ENCODE measurements at regions of chr3 and their contacts with region 1.

Region 1: GRCh38 chr3:122564155-122564912 is at the starts of genes DTX3L and PARP9:
- DNase-seq: peak; percentile 80 to 89
- ATAC-seq: peak; percentile 95
- H3K4me3 ChIP-seq: peak within 1 kb of the TSS; percentile 76
- H3K27ac ChIP-seq: peak within 1 kb of the TSS; percentile 75
- H3K4me1 ChIP-seq: peaks cover 17% of the 10 kb centered on the region
- H3K27me3 ChIP-seq: no peaks in the 10 kb centered on the region
- CTCF ChIP-seq: no peak
- total RNA-seq, gene DTX3L: 11.5 to 26.6 (median 12.2) TPM
- total RNA-seq, gene PARP9: 8.9 to 18.9 (median 12.6) TPM

Region 2: DNA sequence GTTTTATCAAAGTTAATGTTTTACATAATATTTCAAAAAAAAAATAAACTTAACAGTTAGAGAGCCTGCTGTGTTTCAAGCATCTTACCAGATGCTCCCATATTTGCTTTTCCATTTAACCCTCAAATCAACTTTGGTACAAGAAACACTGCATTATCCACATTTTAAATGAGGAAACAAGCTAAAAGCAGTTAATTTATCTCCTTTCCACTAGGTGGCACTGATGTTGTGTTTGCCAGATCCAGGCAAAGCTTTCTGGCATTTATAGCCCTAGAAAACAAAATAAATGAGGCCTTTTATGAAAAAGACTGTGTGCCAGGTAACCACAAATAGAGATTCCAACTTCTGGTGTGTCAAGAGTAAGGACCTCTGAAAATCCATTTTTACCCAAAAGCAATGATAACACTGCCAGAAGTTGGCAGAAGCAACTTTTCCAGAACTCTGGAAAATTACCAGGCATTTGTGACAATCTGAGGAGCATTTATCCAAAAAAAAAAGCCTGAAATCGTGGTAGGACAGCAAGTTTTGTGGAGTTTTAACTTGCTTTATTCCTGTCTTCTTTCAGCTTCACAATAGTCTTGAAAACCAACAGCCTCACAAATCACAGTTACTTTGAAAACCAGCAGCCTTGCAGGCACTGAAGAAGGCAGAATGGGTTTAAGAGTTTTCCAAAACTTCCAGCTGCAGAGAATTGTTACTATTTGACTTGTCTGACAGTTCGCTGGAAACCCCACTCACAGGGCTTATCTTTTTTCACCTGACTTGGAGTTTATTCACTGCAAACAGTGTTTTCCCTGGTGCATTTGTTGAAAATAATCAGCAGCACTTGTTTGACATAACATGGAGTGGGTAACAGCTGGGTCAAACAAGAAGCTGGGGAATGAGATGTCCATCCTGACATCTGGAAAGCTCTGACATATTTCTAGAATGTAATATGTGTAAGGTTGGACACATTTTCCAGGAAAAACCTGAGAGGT is 171.2 kb before region 1 on chr3:
- intact Hi-C with region 1: loop called in 1 of 2 experiments (anchors 5 kb)
- DNase-seq: no peak
- ATAC-seq: peak in 3 of 4 donors; percentile 43 to 76 (median 48)
- H3K4me3 ChIP-seq: no peak overlapping the region
- H3K27ac ChIP-seq: no peak overlapping the region
- H3K4me1 ChIP-seq: no peaks in the 10 kb centered on the region
- H3K27me3 ChIP-seq: no peaks in the 10 kb centered on the region
- CTCF ChIP-seq: peak; percentile 83

Region 3: DNA sequence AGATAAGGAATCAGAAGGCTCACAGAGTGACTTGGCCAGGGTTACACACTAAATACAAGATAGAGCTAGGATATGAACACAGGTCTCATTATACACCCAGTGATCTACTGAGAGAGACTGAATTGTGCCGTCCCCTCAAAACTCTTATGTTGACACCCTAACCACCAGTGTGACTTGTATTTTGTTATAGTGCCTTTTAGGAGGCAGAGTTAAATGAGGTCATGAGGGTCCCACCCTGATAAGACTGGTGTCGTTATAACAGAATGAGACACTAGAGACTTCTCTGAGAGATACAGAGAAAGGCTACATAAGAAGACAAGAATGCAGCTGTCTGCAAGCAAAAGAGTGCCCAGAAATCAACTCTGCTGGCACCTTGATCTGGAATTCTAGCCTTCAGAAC is 62.2 kb before region 1 on chr3:
- intact Hi-C with region 1: no loop called
- DNase-seq: no peak
- ATAC-seq: no peak
- H3K4me3 ChIP-seq: no peak overlapping the region
- H3K27ac ChIP-seq: peak overlapping the region; percentile 18
- H3K4me1 ChIP-seq: peaks cover 87% of the 10 kb centered on the region
- H3K27me3 ChIP-seq: no peaks in the 10 kb centered on the region
- CTCF ChIP-seq: no peak

Region 4: GRCh38 chr3:122514123-122515019 is 50.0 kb before region 1 on chr3 and contains the start of gene KPNA1:
- intact Hi-C with region 1: loop called in 1 of 2 experiments (anchors 5 kb)
- DNase-seq: peak; percentile 89 to 93
- ATAC-seq: peak; percentile 90 to 93 (median 92)
- H3K4me3 ChIP-seq: peak within 1 kb of the TSS; percentile 95
- H3K27ac ChIP-seq: peak within 1 kb of the TSS; percentile 100
- H3K4me1 ChIP-seq: peaks cover 43% of the 10 kb centered on the region
- H3K27me3 ChIP-seq: no peaks in the 10 kb centered on the region
- CTCF ChIP-seq: no peak
- total RNA-seq, gene KPNA1: 180 to 263 (median 233) TPM

Region 5: DNA sequence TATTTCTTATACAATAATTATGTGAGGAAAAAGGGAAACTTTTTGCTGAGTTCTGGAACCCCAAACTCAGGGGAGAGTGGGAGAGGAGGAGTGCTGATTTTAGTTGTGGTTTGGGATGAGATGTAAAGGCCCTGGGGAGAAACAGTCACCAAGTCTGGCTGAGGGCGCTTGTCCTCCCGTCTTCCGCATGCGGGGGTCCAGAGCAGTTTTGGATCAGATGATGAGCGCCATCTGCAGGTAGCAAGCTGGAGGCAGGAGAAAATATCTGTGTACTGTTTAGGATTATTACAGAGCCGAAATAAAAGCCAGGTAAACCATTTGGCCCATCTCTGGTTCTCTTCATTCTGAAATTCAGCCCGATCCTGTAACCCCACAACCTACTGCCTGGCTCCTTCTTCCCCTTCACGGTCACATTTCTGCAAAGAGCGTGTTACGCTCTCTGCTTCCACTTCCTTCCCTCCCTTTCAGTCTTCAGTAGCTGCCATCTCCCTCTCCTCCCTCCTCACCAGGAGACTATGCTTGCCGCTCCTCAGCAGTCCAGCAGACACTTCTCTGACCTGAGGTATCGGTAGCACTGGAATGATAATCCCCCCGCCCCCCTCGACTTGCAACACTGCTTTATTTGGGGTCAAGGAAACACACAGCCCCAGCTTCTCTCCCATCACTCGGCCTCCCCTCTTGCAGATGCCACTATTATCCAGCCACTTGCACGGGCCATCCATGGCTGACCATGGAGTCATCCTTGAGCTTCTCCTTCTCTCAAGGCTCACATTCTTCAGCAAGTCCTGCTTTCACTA is 114.9 kb after region 1 on chr3:
- intact Hi-C with region 1: loop called (anchors 1 to 2 kb)
- DNase-seq: peak; percentile 82 to 84
- ATAC-seq: peak; percentile 70 to 88 (median 78)
- H3K4me3 ChIP-seq: peak overlapping the region; percentile 78
- H3K27ac ChIP-seq: peak overlapping the region; percentile 74
- H3K4me1 ChIP-seq: no peaks in the 10 kb centered on the region
- H3K27me3 ChIP-seq: no peaks in the 10 kb centered on the region
- CTCF ChIP-seq: peak; percentile 76

Measured in psoas muscle (tissue), 8 donors.